ENCODE measurements at regions of chrX and their contacts with region 1.

Region 1: GRCh38 chrX:97199501-97199900 is 315.8 kb downstream of the RPA4 start:
- DNase-seq: no peak
- ATAC-seq: no peak
- H3K4me3 ChIP-seq: no peak overlapping the region
- H3K27ac ChIP-seq: no peak overlapping the region
- H3K4me1 ChIP-seq: no peaks in the 10 kb centered on the region
- H3K27me3 ChIP-seq: no peaks in the 10 kb centered on the region
- CTCF ChIP-seq: no peak

Region 2: DNA sequence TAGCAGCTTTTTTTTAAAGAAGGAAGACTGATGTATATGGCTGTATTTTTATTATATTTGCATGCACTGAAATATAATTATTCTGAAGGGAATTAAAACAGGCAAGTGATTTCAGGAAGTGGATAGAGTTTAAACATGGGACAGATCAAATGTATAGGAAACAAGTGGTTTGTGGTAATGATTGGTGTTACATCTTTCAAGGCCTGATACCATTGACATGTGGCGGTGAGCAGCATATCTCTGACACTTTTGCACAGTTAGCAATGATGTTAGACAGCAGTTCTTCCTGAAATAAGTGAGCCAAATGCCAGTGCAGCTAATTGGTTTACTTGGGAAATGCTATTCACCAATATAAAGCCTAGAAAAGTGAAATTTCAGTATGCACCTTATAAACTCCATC is 43.7 kb before region 1 on chrX:
- CTCF ChIA-PET with region 1: no interaction called
- POLR2A ChIA-PET with region 1: no interaction called
- intact Hi-C with region 1: no loop called
- DNase-seq: no peak
- ATAC-seq: no peak
- H3K4me3 ChIP-seq: no peak overlapping the region
- H3K27ac ChIP-seq: no peak overlapping the region
- H3K4me1 ChIP-seq: peaks cover 6% of the 10 kb centered on the region; the same call in 1 of the 2 replicates
- H3K27me3 ChIP-seq: no peaks in the 10 kb centered on the region
- CTCF ChIP-seq: no peak

Region 3: GRCh38 chrX:97389761-97390192 is 190.3 kb after region 1 on chrX:
- CTCF ChIA-PET with region 1: interaction called, 14 read pairs
- POLR2A ChIA-PET with region 1: no interaction called
- intact Hi-C with region 1: no loop called
- DNase-seq: peak; percentile 68
- ATAC-seq: peak; percentile 90
- H3K4me3 ChIP-seq: 0 out of 2 replicates have a peak overlapping the region, but pooled peaks have one; percentile 13
- H3K27ac ChIP-seq: peak overlapping the region; percentile 79
- H3K4me1 ChIP-seq: peaks cover 23% of the 10 kb centered on the region
- H3K27me3 ChIP-seq: no peaks in the 10 kb centered on the region
- CTCF ChIP-seq: no peak